GM12878 (cell line): ENCODE measurements at regions of chr13 and their contacts with region 1.

Region 1: GRCh38 chr13:51070005-51070649 is 40.9 kb downstream of the C13orf42 start:
- DNase-seq: peak; percentile 30
- ATAC-seq: peak; percentile 95
- H3K4me3 ChIP-seq: no peak overlapping the region
- H3K27ac ChIP-seq: no peak overlapping the region
- H3K4me1 ChIP-seq: no peaks in the 10 kb centered on the region
- H3K27me3 ChIP-seq: no peaks in the 10 kb centered on the region; a peak in 2 of 4 replicates
- CTCF ChIP-seq: peak; percentile 92 to 97 (median 96); a peak in 5 of 6 replicates
- EP300 ChIP-seq: no peak
- POLR2A ChIP-seq: no peak
- RAD21 ChIP-seq: peak; percentile 97

Region 2: GRCh38 chr13:49669735-49670309 is 1400.3 kb before region 1 on chr13:
- CTCF ChIA-PET with region 1: interaction called, 5 read pairs
- POLR2A ChIA-PET with region 1: no interaction called
- RAD21 ChIA-PET with region 1: interaction called, 3 read pairs
- SMC1A ChIA-PET with region 1: no interaction called
- in situ Hi-C with region 1: loop called (anchors 25 kb)
- intact Hi-C with region 1: loop called (anchors 1 kb)
- DNase-seq: no peak
- ATAC-seq: peak; percentile 99
- H3K4me3 ChIP-seq: no peak overlapping the region
- H3K27ac ChIP-seq: no peak overlapping the region
- H3K4me1 ChIP-seq: no peaks in the 10 kb centered on the region
- H3K27me3 ChIP-seq: no peaks in the 10 kb centered on the region
- CTCF ChIP-seq: peak; percentile 76 to 82 (median 79)
- EP300 ChIP-seq: no peak
- POLR2A ChIP-seq: no peak
- RAD21 ChIP-seq: peak; percentile 82

Region 3: DNA sequence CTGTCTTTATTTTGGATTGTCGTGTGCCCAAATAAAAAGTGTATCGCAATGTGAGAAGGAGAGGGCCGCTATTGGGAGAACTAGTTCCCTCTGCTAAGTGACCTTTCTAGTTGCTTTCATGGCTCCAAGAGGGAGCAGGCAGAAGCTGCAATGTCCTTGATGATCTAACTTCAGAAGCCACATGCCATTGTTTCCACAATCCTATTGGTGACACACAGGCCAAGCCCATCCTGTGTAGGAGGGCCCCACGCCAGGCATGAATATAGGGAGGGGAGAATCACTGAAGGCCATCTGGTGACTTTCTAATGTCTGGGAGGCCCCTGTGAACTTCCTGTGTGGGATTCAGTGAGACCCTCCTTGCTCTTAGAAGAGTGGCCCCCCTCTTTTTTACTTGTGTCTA is 1229.9 kb before region 1 on chr13:
- CTCF ChIA-PET with region 1: no interaction called
- POLR2A ChIA-PET with region 1: no interaction called
- RAD21 ChIA-PET with region 1: no interaction called
- SMC1A ChIA-PET with region 1: no interaction called
- in situ Hi-C with region 1: no loop called
- intact Hi-C with region 1: loop called (anchors 5 kb)
- DNase-seq: no peak
- ATAC-seq: no peak
- H3K4me3 ChIP-seq: no peak overlapping the region
- H3K27ac ChIP-seq: no peak overlapping the region
- H3K4me1 ChIP-seq: no peaks in the 10 kb centered on the region
- H3K27me3 ChIP-seq: no peaks in the 10 kb centered on the region
- CTCF ChIP-seq: no peak
- EP300 ChIP-seq: no peak
- POLR2A ChIP-seq: no peak
- RAD21 ChIP-seq: no peak

Region 4: DNA sequence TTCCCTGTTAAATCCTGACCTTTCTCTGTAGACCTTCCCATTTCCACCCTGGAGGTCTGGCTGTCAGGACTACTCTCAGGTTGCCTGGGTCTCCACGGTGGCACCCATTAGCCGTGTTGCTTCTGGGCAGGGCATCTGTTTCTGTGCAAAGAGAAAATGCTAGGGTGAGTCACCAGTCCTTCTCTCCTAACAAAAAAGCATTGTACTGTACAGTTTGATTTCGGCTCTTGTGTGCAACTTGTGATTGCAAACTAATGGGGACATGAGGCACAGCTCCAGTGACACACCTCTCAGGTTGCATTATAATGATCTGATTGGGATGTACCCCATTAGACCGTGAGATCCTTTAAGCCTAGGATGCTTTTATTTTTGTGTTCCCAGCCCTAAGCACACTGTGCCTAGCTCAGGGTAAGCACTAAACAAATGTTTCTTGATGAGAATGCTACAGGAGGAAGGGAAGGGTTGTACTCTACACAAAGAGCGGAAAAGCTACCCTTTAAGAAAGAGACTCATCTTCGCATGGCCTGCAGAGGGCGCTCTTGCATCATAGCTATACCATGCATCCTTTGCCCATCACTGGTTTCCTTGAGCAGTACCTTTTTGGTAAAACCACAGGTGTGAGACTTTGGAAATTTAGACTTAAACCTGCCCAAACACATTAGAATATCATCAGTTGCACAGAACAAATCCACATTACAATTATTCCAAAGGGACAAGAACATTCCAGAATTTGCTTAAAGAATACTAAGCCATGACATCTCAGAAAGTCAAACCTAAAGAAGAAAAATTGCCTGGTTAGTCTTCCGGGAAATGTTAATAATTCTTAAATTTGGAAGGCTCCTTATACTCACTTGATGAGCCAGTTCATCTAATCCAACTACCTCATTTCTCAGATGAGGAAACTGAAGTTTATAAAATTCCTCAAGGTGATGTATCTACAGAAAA is 1093.5 kb before region 1 on chr13:
- CTCF ChIA-PET with region 1: interaction called, 28 read pairs
- POLR2A ChIA-PET with region 1: no interaction called
- RAD21 ChIA-PET with region 1: interaction called, 14 read pairs
- SMC1A ChIA-PET with region 1: interaction called, 29 read pairs
- in situ Hi-C with region 1: loop called (anchors 5 kb)
- intact Hi-C with region 1: loop called (anchors 1 kb)
- DNase-seq: peak; percentile 55
- ATAC-seq: peak; percentile 95
- H3K4me3 ChIP-seq: no peak overlapping the region
- H3K27ac ChIP-seq: no peak overlapping the region
- H3K4me1 ChIP-seq: no peaks in the 10 kb centered on the region
- H3K27me3 ChIP-seq: no peaks in the 10 kb centered on the region
- CTCF ChIP-seq: peak; percentile 86 to 95 (median 88)
- EP300 ChIP-seq: no peak
- POLR2A ChIP-seq: no peak
- RAD21 ChIP-seq: peak; percentile 99

Region 5: GRCh38 chr13:50512474-50513299 is 557.4 kb before region 1 on chr13:
- CTCF ChIA-PET with region 1: no interaction called
- POLR2A ChIA-PET with region 1: no interaction called
- RAD21 ChIA-PET with region 1: no interaction called
- SMC1A ChIA-PET with region 1: no interaction called
- in situ Hi-C with region 1: no loop called
- intact Hi-C with region 1: loop called (anchors 10 kb)
- DNase-seq: no peak
- ATAC-seq: peak; percentile 97
- H3K4me3 ChIP-seq: peak overlapping the region; percentile 53; the same call in 1 of the 2 replicates
- H3K27ac ChIP-seq: peak overlapping the region; percentile 72
- H3K4me1 ChIP-seq: peaks cover 22% of the 10 kb centered on the region
- H3K27me3 ChIP-seq: peaks cover 0 to 2% of the 10 kb centered on the region in 2 experiments; a peak in 1 of 4 replicates
- CTCF ChIP-seq: no peak
- EP300 ChIP-seq: no peak
- POLR2A ChIP-seq: no peak; the same call in 1 of the 2 replicates
- RAD21 ChIP-seq: no peak

Region 6: GRCh38 chr13:51052581-51052980 is 17.5 kb before region 1 on chr13:
- CTCF ChIA-PET with region 1: interaction called, 13 read pairs
- POLR2A ChIA-PET with region 1: no interaction called
- RAD21 ChIA-PET with region 1: no interaction called
- SMC1A ChIA-PET with region 1: interaction called, 6 read pairs
- in situ Hi-C with region 1: no loop called
- intact Hi-C with region 1: no loop called
- DNase-seq: no peak
- ATAC-seq: no peak
- H3K4me3 ChIP-seq: no peak overlapping the region
- H3K27ac ChIP-seq: no peak overlapping the region
- H3K4me1 ChIP-seq: no peaks in the 10 kb centered on the region
- H3K27me3 ChIP-seq: no peaks in the 10 kb centered on the region; a peak in 1 of 4 replicates
- CTCF ChIP-seq: no peak
- EP300 ChIP-seq: no peak
- POLR2A ChIP-seq: no peak
- RAD21 ChIP-seq: no peak